Calu3 (cell line): ENCODE measurements at regions of chr1 and their contacts with region 1.

Region 1: DNA sequence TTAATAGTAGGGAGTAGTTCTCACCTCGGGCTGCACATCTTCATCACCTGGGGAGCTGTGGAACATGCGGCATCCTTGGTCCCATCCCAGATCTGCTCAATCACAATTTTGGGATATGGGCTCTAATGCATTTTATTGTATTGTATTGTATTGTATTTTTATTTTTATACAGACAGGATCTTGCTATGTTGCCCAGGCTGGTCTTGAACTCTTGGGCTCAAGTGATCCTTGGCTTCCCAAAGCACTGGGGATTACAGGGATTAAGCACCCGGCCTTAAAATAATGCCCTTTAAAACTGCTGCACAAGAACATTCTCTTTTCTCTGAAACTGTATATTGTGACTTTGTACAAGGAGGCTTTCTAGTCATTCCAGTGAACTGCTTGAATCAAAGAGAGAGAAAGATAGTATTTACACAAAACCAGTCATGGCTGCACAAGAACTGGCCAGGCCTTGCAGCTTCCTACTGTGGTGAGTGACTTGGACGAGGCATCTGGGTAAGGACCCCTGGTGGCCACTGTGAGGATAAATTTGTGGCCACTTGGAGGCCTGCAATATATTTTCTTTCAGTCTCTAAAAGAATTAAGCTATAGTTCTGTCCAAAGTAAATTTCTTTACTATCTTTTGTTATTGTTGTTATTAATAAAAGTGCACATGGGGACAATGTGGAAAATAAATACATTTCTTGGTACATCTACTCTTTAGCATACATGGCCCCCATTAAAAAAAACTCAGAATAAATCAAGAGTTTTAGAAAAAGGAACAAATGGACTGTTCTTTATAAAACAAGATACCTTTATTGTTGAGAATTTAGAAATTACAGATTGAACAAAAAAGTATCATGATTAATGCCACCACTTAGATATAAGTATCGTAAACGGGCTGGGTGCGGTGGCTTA is 48.0 kb downstream of the TBCE start:
- DNase-seq: peak; percentile 81
- H3K4me3 Mint-ChIP-seq: no peak overlapping the region
- H3K27ac Mint-ChIP-seq: no peak overlapping the region
- H3K4me1 Mint-ChIP-seq: no peaks in the 10 kb centered on the region
- H3K27me3 Mint-ChIP-seq: no peaks in the 10 kb centered on the region
- CTCF ChIP-seq: peak; percentile 87

Region 2: GRCh38 chr1:234114648-234115307 is 1300.5 kb before region 1 on chr1:
- CTCF ChIA-PET with region 1: no interaction called
- intact Hi-C with region 1: loop called (anchors 10 kb)
- DNase-seq: peak; percentile 28
- H3K4me3 Mint-ChIP-seq: peak overlapping the region; percentile 40
- H3K27ac Mint-ChIP-seq: no peak overlapping the region
- H3K4me1 Mint-ChIP-seq: peaks cover 9% of the 10 kb centered on the region
- H3K27me3 Mint-ChIP-seq: peaks cover 7% of the 10 kb centered on the region
- CTCF ChIP-seq: peak; percentile 57

Region 3: DNA sequence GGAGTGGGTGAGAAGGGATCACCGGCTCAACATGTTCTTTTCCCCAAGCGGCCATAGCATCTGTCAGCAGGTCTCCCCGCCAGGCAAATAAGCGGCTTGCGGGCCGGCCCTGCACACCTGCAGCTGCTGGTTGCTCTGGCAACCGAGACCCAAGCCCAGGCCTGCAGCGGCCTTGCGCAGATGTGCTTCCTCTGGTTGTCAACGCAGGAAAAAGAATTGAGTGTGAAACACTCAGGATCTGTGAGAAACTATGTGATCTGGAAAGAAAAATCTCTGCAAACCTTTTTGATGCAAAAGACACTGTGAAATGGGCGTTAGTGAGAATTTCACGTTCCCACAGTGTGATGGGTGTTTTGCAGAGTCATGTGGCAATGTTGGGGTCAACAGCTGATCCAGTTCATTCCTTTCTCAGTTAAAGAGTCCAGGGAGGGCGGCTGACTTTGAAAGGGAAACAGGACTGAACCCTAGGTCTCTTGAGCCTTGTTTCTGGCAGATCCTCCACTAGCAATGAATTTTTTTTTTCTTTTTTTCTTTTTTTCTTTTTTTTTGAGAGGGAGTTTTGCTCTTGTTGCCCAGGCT is 315.0 kb before region 1 on chr1:
- CTCF ChIA-PET with region 1: no interaction called
- intact Hi-C with region 1: loop called (anchors 5 kb)
- DNase-seq: no peak
- H3K4me3 Mint-ChIP-seq: no peak overlapping the region
- H3K27ac Mint-ChIP-seq: no peak overlapping the region
- H3K4me1 Mint-ChIP-seq: peaks cover 16% of the 10 kb centered on the region
- H3K27me3 Mint-ChIP-seq: no peaks in the 10 kb centered on the region
- CTCF ChIP-seq: no peak

Region 4: DNA sequence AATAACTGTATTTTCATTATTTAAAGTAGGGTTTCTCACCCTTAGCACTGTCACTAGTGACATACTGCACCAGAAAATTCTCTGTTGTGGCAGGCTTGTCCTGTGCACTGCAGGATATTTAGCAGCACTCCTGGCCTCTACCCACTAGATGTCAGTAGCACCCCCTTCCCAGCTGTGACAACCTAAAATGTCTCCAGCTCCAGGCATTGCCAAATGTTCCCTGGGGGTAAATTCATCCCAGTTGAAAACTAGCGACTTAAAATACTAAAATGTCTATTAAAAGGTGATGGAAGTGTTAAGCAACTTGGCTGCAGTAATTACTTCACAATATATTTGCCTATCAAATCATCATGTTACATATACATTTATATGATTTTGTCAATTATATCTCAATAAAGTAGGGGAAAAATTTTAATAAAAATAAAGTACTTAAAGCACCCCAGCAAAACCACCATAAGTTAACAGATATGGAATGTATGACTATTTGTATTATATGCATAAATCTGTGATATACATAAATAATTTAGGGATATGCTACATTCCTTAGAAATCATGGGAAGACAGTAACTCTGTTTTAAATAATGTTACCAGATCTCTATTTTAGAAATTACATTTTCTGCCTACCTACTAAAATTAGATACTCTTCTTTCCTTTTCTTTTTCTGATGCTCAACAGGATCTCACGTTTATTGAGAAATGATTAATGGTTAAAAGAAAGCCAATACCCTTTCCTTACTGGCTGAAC is 161.9 kb before region 1 on chr1:
- CTCF ChIA-PET with region 1: interaction called, 9 read pairs
- intact Hi-C with region 1: loop called (anchors 1 kb)
- DNase-seq: peak; percentile 80
- H3K4me3 Mint-ChIP-seq: no peak overlapping the region
- H3K27ac Mint-ChIP-seq: peak overlapping the region; percentile 21
- H3K4me1 Mint-ChIP-seq: peaks cover 6% of the 10 kb centered on the region
- H3K27me3 Mint-ChIP-seq: no peaks in the 10 kb centered on the region
- CTCF ChIP-seq: peak; percentile 82

Region 5: DNA sequence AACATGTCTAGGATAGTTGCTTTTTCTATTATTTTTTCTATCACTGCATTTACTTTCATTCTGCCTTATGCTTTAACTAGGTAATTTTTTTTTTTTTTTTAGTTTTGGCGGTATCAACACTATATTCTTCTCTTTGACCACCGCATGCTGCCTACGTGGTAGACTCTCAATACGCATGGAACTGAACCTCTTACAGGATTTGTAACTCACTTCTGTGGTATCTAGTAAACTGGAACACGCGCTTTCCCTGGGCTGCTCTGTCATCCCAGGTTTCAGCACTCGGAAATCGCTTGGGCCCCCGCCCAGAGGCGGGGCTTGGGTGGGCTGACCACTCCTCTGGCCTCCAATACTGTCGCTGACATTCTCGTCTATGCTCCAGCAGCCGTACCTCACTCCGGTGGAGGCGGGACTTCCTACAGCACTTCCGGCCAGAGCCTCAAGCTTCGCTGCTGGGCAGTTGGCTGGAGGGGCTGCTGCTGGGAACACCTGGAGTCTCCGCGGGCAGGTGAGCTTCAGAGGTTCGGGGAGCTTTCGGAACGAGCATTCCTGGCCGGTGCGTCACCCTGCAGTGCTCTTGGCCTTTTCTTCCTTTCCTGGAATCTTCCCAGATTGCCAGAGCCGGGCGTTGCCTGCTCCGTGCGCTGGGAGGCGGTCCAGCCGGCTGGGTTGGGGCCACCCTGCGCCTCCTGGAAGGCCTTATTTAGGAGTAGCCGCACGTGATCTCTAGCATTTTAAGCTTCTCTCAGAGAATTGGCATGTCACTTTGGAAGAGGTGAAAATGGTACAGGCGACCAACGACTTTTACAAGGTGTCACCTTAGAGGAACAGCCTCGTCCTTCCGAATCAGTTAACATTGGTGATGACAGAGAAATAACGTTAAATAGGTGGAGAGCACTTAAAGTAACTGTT is 48.0 kb before region 1 on chr1 and contains the start of gene TBCE:
- CTCF ChIA-PET with region 1: interaction called, 22 read pairs
- intact Hi-C with region 1: loop called (anchors 2 kb)
- DNase-seq: peak; percentile 99
- H3K4me3 Mint-ChIP-seq: peak within 1 kb of the TSS; percentile 87
- H3K27ac Mint-ChIP-seq: peak within 1 kb of the TSS; percentile 93
- H3K4me1 Mint-ChIP-seq: peaks cover 31% of the 10 kb centered on the region
- H3K27me3 Mint-ChIP-seq: no peaks in the 10 kb centered on the region
- CTCF ChIP-seq: no peak
- total RNA-seq, gene TBCE: 19.0 and 31.3 TPM in 2 replicates

Region 6: GRCh38 chr1:235430991-235431390 is 15.7 kb after region 1 on chr1:
- CTCF ChIA-PET with region 1: no interaction called
- intact Hi-C with region 1: no loop called
- DNase-seq: no peak
- H3K4me3 Mint-ChIP-seq: no peak overlapping the region
- H3K27ac Mint-ChIP-seq: no peak overlapping the region
- H3K4me1 Mint-ChIP-seq: no peaks in the 10 kb centered on the region
- H3K27me3 Mint-ChIP-seq: no peaks in the 10 kb centered on the region
- CTCF ChIP-seq: no peak